RWPE1 (cell line): ENCODE measurements at regions of chr1 and their contacts with region 1.

Region 1: GRCh38 chr1:225777583-225778336 is at the start of gene SRP9:
- DNase-seq: peak; percentile 100
- H3K27ac ChIP-seq: peak within 1 kb of the TSS; percentile 98
- CTCF ChIP-seq: peak; percentile 95

Region 2: GRCh38 chr1:225480825-225481434 is 296.8 kb before region 1 on chr1:
- CTCF ChIA-PET with region 1: interaction called, 39 read pairs
- POLR2A ChIA-PET with region 1: interaction called, 3 read pairs
- DNase-seq: peak; percentile 81
- H3K27ac ChIP-seq: no peak overlapping the region
- CTCF ChIP-seq: peak; percentile 73

Region 3: GRCh38 chr1:225617479-225617878 is 160.3 kb before region 1 on chr1:
- CTCF ChIA-PET with region 1: no interaction called
- POLR2A ChIA-PET with region 1: no interaction called
- DNase-seq: no peak
- H3K27ac ChIP-seq: no peak overlapping the region
- CTCF ChIP-seq: no peak

Region 4: GRCh38 chr1:225642177-225642576 is 135.6 kb before region 1 on chr1:
- CTCF ChIA-PET with region 1: interaction called, 5 read pairs
- POLR2A ChIA-PET with region 1: interaction called, 12 read pairs
- DNase-seq: no peak
- H3K27ac ChIP-seq: no peak overlapping the region
- CTCF ChIP-seq: no peak

Region 5: GRCh38 chr1:225735252-225736149 is 42.3 kb before region 1 on chr1:
- CTCF ChIA-PET with region 1: interaction called, 35 read pairs
- POLR2A ChIA-PET with region 1: no interaction called
- DNase-seq: peak; percentile 97
- H3K27ac ChIP-seq: peak overlapping the region; percentile 92
- CTCF ChIP-seq: no peak

Region 6: GRCh38 chr1:225813214-225813964 is 35.6 kb after region 1 on chr1:
- CTCF ChIA-PET with region 1: interaction called, 10 read pairs
- POLR2A ChIA-PET with region 1: interaction called, 3 read pairs
- DNase-seq: peak; percentile 49
- H3K27ac ChIP-seq: peak overlapping the region; percentile 93
- CTCF ChIP-seq: no peak